Left cardiac atrium (tissue), 4 donors: ENCODE measurements at regions of chr17 and their contacts with region 1.

Region 1: DNA sequence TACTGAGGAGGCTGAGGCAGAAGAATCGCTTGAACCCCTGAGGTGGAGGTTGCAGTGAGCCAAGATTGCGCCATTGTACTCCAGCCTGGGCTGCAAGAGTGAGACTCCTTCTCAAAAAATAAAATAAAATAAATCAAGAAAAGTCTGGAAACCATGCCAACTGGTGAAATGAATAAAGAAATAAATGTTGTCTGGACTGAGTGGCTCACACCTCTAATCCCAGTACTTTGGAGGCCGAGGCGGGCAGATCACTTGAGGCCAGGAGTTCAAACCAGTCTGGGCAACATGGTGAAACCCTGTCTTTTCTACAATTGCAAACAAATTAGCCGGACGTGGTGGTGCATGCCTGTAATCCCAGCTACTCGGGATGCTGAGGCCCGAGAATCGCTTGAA is 744 bp upstream of the LRRC37A3 start:
- DNase-seq: no peak
- ATAC-seq: peak in 1 of 2 donors; percentile 14

Region 2: GRCh38 chr17:65055348-65056261 is 135.6 kb after region 1 on chr17:
- intact Hi-C with region 1: no loop called
- DNase-seq: peak; percentile 69
- ATAC-seq: peak; percentile 48 to 55

Region 3: GRCh38 chr17:65122836-65123756 is 203.1 kb after region 1 on chr17:
- intact Hi-C with region 1: no loop called
- DNase-seq: peak; percentile 85
- ATAC-seq: peak; percentile 95

Region 4: DNA sequence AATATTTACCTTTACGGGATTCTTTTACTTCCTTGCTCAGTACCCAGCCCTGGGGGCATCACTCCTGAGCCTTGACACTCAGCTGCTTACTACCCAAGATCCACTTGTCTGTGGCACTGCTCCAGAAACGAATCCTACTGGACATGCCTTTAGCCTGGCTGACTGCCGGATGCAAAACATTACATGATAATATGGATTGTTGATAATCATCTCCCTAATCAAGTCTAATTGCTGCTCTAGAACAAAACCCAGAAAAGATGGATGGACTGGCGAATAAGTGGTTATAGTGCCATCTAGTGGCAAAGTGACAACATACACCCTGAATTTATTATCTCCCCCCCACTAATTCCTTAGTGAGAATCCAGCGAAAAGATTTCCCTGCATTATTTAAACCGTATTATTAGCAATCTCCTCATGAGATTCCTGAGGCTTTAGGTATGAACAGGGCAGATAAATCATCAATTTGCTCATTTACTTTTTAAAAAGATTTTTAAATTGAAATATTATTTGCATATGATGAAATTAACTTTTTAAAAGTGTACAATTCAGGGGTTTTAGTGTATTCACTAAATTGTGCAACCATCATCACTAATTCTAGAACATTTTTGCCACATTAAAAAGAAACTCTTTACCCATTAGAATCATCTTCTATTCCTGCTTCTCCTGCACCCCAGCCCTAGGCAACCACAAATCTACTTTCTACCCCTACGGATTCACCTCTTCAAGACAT is 278.8 kb after region 1 on chr17:
- intact Hi-C with region 1: loop called in 1 of 2 experiments (anchors 10 kb)
- DNase-seq: no peak
- ATAC-seq: peak; percentile 27 to 44